Sigmoid colon (tissue), 7 donors: ENCODE measurements at regions of chr3 and their contacts with region 1.

Region 1: DNA sequence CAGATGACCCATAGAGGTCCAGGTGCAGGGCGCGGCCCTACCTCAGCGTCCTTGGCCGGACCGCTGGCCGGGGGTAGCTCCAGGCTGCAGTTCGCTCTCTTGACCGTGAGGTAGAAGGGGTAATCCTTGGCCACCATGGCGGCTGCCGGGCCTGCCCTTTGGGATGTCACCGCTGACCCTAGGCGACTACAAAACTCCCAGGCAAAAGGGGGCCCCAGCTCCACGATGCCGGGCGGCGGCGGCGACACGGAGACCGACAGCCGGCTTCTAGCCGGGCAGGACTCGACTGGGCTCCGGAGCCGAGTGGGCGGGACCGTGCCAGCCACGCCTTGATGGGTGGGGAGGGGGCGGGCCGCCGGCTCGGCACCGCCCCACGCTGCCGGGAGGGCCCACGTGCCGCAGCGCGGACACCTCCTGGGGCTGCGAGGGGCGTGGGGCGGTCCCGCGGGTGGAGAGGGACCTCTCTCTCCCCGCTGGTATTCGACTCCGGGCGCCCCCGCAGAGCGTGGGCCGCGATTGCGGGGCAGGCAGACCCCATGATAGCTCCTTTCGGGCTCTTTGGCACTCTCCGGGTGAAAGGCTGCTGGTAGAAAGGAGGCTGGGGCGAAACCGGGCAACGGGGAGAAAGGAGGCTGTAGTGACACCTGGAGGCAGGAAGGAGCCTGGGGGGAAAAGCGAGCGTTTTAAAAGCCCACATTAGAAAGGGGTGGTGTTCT is at the start of gene ARHGEF3:
- DNase-seq: peak; percentile 90
- H3K4me3 ChIP-seq: peak within 1 kb of the TSS; percentile 65 to 74 (median 72)
- H3K27ac ChIP-seq: peak within 1 kb of the TSS; percentile 64 to 78 (median 69)
- H3K4me1 ChIP-seq: peaks cover 0 to 73% (median 55%) of the 10 kb centered on the region in 4 donors
- H3K27me3 ChIP-seq: no peaks in the 10 kb centered on the region
- CTCF ChIP-seq: peak in 3 of 4 experiments; percentile 9 to 13 (median 9)
- EP300 ChIP-seq: no peak
- POLR2A ChIP-seq: peak; percentile 56 to 75
- total RNA-seq, gene ARHGEF3: 20.3 to 34.2 (median 24.5) TPM

Region 2: DNA sequence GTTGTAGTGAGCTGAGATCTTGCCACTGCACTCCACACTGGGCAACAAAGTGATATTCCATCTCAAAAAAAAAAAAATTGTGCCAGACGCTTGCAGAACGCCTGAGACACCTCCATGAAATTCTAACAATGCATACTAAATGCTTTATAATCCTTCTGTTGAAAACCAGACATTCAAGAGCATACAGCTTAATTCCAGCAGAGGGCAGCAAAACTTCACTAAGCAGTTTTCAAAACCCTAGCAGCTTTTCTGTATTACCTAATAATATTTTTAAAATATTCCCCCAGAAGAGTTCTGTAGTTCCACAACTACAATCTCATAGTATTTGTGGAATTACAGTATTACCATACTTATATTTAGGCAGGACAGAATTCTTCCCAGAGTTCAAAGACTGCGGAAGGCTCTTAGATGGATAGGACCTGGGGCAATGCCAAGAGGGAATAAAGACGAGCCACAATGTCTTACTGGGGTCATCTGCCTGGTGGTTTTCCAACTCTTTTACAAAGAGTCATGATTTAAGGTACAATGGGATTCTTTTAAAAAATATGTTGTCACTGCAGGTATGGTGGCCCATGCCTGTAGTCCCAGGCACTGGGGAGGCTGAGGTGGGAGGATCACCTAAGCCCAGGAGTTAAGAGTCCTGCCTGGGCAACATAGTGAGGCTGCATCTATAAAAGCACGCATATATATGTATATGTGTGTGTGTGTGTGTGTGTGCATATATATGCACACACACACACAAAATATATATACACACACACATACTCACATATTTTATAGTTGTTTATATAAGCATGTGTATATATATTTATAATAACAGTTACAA is 99.1 kb before region 1 on chr3:
- intact Hi-C with region 1: loop called (anchors 1 kb)
- DNase-seq: no peak
- H3K4me3 ChIP-seq: no peak overlapping the region
- H3K27ac ChIP-seq: no peak overlapping the region
- H3K4me1 ChIP-seq: peaks cover 0 to 7% (median 3%) of the 10 kb centered on the region in 4 donors
- H3K27me3 ChIP-seq: no peaks in the 10 kb centered on the region
- CTCF ChIP-seq: peak; percentile 69 to 81 (median 77)
- EP300 ChIP-seq: no peak
- POLR2A ChIP-seq: no peak

Region 3: DNA sequence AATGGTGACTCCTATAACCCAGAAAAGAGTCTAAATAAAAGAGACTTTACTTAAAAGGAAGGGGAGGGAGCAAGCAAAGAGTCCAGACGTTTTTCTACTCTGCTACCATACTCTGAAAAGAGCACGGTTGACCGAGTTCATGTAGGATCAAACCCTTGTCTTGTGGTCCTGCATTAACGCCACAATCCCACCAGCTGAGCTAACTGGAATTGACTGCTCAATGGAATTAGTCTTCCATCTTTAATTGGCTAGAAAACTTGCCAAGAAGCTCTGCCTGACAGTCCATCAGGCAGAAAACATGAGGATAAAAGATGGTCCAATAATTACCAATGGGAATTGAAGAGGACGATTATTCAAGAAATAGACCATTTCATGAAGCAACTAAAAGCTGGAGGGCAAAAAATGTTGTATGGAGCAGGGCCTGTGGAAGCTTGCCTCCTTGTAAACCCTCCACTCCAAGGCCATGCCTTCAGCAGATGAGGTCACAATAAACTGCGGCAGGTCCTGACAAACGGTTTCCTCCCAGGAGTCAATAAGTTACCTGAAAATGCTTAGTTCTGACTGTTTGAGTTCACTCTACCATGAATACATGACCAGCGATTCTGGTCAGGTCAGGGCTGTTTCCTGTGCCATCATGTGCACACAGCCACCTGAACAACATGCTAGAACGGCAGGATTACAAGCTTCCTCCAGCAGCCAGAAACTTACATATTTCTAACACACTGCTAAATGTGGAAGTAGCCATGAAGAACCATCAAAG is 35.6 kb after region 1 on chr3:
- intact Hi-C with region 1: no loop called
- DNase-seq: no peak
- H3K4me3 ChIP-seq: no peak overlapping the region
- H3K27ac ChIP-seq: no peak overlapping the region
- H3K4me1 ChIP-seq: peaks cover 0 to 10% (median 0%) of the 10 kb centered on the region in 4 donors
- H3K27me3 ChIP-seq: no peaks in the 10 kb centered on the region
- CTCF ChIP-seq: no peak
- EP300 ChIP-seq: no peak
- POLR2A ChIP-seq: no peak

Region 4: GRCh38 chr3:56928379-56929068 is 126.7 kb after region 1 on chr3:
- intact Hi-C with region 1: loop called (anchors 5 kb)
- DNase-seq: no peak
- H3K4me3 ChIP-seq: no peak overlapping the region
- H3K27ac ChIP-seq: peak overlapping the region in 2 of 4 donors; percentile 16 to 72
- H3K4me1 ChIP-seq: peaks cover 0 to 68% (median 58%) of the 10 kb centered on the region in 4 donors
- H3K27me3 ChIP-seq: no peaks in the 10 kb centered on the region
- CTCF ChIP-seq: no peak
- EP300 ChIP-seq: no peak
- POLR2A ChIP-seq: no peak

Region 5: GRCh38 chr3:56988458-56989168 is 186.8 kb after region 1 on chr3:
- intact Hi-C with region 1: loop called (anchors 2 kb)
- DNase-seq: peak; percentile 91
- H3K4me3 ChIP-seq: no peak overlapping the region
- H3K27ac ChIP-seq: peak overlapping the region in 3 of 4 donors; percentile 55 to 62 (median 55)
- H3K4me1 ChIP-seq: peaks cover 0 to 42% (median 25%) of the 10 kb centered on the region in 4 donors
- H3K27me3 ChIP-seq: no peaks in the 10 kb centered on the region
- CTCF ChIP-seq: peak; percentile 67 to 85 (median 76)
- EP300 ChIP-seq: no peak
- POLR2A ChIP-seq: no peak

Region 6: DNA sequence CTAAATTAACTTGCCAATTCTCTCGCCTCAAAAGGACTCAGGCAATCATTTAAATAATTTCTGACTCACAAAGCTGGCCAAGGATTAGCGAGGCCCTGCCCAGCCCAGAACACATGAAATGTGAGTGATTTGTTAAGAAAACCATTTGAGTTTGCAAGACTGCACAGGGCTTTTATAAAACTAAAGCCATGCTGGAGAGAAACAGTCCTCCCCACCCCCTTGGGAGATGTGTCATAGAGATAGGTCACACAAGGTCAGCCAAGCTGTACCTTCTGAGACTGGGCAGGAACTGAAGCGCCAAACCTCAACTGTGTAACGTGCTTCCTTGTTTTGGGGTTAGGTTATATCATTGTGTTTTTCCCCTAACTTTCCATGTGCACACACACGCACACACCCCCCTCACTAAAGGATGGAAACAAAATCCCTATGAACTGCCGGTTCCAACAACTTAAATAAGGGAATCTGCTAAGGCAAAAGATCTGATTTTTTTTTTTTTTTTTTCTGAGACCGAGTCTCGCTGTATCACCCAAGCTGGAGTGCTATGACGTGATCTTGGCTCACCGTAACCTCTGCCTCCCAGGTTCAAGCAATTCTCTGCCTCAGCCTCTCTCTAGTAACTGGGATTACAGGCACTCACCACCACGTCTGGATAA is 266.7 kb after region 1 on chr3:
- intact Hi-C with region 1: loop called (anchors 5 kb)
- DNase-seq: peak; percentile 84
- H3K4me3 ChIP-seq: no peak overlapping the region
- H3K27ac ChIP-seq: peak overlapping the region; percentile 65 to 79 (median 71)
- H3K4me1 ChIP-seq: peaks cover 0 to 53% (median 33%) of the 10 kb centered on the region in 4 donors
- H3K27me3 ChIP-seq: no peaks in the 10 kb centered on the region
- CTCF ChIP-seq: no peak
- EP300 ChIP-seq: no peak
- POLR2A ChIP-seq: no peak